Motor neuron (in vitro differentiated cells): ENCODE measurements at regions of chr5 and their contacts with region 1.

Region 1: DNA sequence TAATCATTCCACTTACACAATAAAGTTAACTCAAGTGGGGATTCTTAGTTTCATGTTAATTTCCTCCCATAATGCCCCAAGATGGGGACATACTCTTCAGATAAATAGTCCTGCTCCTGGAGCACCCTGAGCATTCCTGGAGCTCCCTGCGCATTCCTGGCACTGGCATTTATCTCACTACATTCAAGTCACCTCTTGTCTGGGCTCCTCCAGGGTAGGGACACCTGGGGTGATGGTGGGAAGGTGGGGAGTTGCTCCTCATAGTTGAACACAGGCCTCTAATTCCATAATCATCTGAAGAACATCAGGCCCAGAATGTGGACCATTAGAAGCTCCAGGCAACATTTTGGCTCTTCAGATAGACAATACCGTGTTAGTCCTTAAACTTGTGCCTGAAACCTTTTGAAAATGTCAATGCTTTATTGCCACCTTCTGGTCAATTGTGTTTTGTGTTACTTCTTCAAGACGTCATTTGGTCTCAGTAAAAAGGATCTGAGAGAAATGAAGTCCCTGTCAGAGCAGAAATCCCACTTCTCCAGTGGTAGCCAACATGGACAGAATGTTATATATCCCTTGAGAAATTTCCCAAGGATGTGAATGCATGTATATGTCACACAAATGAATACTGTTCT is 14.2 kb upstream of the AGGF1 start:
- ATAC-seq: peak in 4 of 8 experiments; percentile 46 to 70 (median 56)
- H3K4me3 ChIP-seq: no peak overlapping the region
- H3K27ac ChIP-seq: no peak overlapping the region
- H3K4me1 ChIP-seq: no peaks in the 10 kb centered on the region

Region 2: GRCh38 chr5:76867827-76868693 is 148.0 kb before region 1 on chr5:
- in situ Hi-C with region 1: loop called in 3 of 9 experiments (anchors 10 to 25 kb)
- ATAC-seq: peak; percentile 57 to 88 (median 64)
- H3K4me3 ChIP-seq: no peak overlapping the region
- H3K27ac ChIP-seq: no peak overlapping the region
- H3K4me1 ChIP-seq: peaks cover 0 to 7% of the 10 kb centered on the region in 2 donors

Region 3: DNA sequence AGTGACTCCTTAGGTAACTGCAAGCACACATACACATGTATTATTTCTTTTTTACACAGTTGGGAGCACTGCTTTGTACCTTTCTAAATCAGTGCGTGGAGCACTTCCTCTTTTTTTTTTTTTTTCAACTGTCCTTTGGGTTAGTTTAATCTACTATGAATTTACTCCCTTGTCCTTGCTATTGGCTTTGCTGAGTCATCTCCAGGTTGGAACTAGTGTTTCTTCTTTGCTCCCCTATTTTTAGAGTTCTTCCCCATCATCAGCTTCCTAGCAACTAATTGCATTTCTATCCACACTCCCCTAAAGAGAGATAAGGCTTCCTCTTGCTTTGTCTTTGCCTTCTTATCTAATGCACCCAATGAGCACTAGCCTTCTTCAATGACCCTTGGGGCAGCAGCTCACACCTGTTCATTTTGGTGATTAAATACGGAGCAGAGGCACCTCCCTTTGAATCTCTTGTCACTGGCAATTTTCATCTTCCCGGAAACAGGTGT is 141.9 kb before region 1 on chr5:
- in situ Hi-C with region 1: loop called in 3 of 9 experiments (anchors 10 to 25 kb)
- ATAC-seq: no peak
- H3K4me3 ChIP-seq: no peak overlapping the region
- H3K27ac ChIP-seq: no peak overlapping the region
- H3K4me1 ChIP-seq: no peaks in the 10 kb centered on the region